ENCODE measurements at regions of chr5 and their contacts with region 1.

Region 1: GRCh38 chr5:52693280-52693679 is 94.4 kb upstream of the ITGA1 start:
- DNase-seq: peak in 4 of 5 donors; percentile 23 to 32 (median 28)
- H3K4me3 ChIP-seq: no peak overlapping the region
- H3K4me3 Mint-ChIP-seq: no peak overlapping the region
- H3K27ac ChIP-seq: no peak overlapping the region
- H3K27ac Mint-ChIP-seq: no peak overlapping the region
- H3K4me1 ChIP-seq: no peaks in the 10 kb centered on the region
- H3K4me1 Mint-ChIP-seq: peaks cover 4 to 7% (median 5%) of the 10 kb centered on the region in 4 donors
- H3K27me3 ChIP-seq: no peaks in the 10 kb centered on the region
- H3K27me3 Mint-ChIP-seq: no peaks in the 10 kb centered on the region

Region 2: GRCh38 chr5:52517667-52518066 is 175.6 kb before region 1 on chr5:
- CTCF ChIA-PET with region 1: no interaction called
- POLR2A ChIA-PET with region 1: no interaction called
- intact Hi-C with region 1: no loop called
- DNase-seq: no peak
- H3K4me3 ChIP-seq: no peak overlapping the region
- H3K4me3 Mint-ChIP-seq: no peak overlapping the region
- H3K27ac ChIP-seq: no peak overlapping the region
- H3K27ac Mint-ChIP-seq: no peak overlapping the region
- H3K4me1 ChIP-seq: no peaks in the 10 kb centered on the region
- H3K4me1 Mint-ChIP-seq: no peaks in the 10 kb centered on the region
- H3K27me3 ChIP-seq: no peaks in the 10 kb centered on the region
- H3K27me3 Mint-ChIP-seq: peaks cover 3 to 6% of the 10 kb centered on the region in 2 donors

Region 3: DNA sequence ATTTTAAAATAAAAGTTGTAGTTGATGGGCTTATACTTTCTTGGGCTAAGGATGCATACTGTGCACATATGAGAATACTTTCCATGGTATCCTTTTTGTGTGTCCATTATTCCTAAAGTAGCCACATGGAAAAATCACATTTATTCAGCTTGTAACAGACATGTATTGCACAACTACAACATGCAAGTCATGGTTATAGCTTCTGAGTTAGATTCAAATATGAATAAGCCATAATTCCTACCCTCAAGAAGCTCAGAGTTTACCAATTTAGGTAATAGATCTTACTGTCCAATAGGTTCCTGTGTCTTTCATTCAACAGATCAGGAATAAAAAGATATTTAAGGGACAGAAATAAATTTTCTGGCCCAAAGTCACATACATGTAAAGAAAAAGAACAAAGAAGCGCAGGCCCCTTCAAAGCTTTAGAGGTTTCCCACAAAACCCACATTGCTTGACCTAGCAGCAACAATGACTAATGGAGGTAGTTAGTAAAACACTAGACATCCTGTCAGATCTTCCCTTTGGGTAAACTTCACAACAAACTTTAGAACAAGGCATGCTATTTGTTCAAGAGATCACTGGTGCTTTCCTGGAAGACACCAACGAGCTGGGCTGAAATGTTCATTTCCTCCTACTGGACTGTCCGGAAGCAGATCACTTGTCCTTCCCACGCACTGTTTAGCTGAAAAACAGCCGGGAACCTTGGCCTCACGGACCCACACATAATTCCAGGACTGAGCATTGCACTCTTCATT is 16.1 kb after region 1 on chr5:
- CTCF ChIA-PET with region 1: interaction called, 13 read pairs
- POLR2A ChIA-PET with region 1: interaction called, 3 read pairs
- intact Hi-C with region 1: no loop called
- DNase-seq: no peak
- H3K4me3 ChIP-seq: no peak overlapping the region
- H3K4me3 Mint-ChIP-seq: peak overlapping the region in 7 of 8 donors; percentile 3 to 64 (median 46)
- H3K27ac ChIP-seq: no peak overlapping the region
- H3K27ac Mint-ChIP-seq: peak overlapping the region in 4 of 7 donors; percentile 19 to 67 (median 32)
- H3K4me1 ChIP-seq: peaks cover 54% of the 10 kb centered on the region
- H3K4me1 Mint-ChIP-seq: peaks cover 42 to 84% (median 60%) of the 10 kb centered on the region in 4 donors
- H3K27me3 ChIP-seq: no peaks in the 10 kb centered on the region
- H3K27me3 Mint-ChIP-seq: no peaks in the 10 kb centered on the region

Region 4: DNA sequence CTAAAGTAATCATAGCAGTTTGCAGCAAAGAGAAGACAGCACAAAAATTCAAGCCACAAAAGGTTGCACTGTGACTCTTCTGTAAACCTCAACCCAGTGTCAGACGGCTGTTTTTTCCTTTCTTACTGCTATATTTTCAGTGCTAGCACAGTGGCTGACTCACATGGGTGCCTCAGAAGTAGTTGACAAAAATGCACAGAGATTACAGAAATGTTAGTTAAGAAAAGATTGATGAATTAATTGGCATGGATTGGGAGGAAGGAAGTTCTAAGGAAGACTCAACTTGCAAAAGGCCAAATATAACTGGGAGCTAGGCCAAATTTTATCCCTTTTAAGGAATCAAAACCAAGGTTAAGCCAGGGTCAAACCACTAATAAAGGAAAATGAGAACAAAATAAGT is 50.7 kb after region 1 on chr5:
- CTCF ChIA-PET with region 1: interaction called, 5 read pairs
- POLR2A ChIA-PET with region 1: no interaction called
- intact Hi-C with region 1: loop called (anchors 2 kb)
- DNase-seq: peak; percentile 40 to 59 (median 52)
- H3K4me3 ChIP-seq: no peak overlapping the region
- H3K4me3 Mint-ChIP-seq: peak overlapping the region; percentile 26 to 79 (median 68)
- H3K27ac ChIP-seq: peak overlapping the region; percentile 34
- H3K27ac Mint-ChIP-seq: peak overlapping the region; percentile 45 to 97 (median 90)
- H3K4me1 ChIP-seq: peaks cover 45% of the 10 kb centered on the region
- H3K4me1 Mint-ChIP-seq: peaks cover 40 to 69% (median 49%) of the 10 kb centered on the region in 4 donors
- H3K27me3 ChIP-seq: no peaks in the 10 kb centered on the region
- H3K27me3 Mint-ChIP-seq: no peaks in the 10 kb centered on the region

Region 5: GRCh38 chr5:52771343-52772039 is 78.2 kb after region 1 on chr5:
- CTCF ChIA-PET with region 1: interaction called, 11 read pairs
- POLR2A ChIA-PET with region 1: no interaction called
- intact Hi-C with region 1: no loop called
- DNase-seq: peak in 4 of 5 donors; percentile 25 to 40 (median 29)
- H3K4me3 ChIP-seq: no peak overlapping the region
- H3K4me3 Mint-ChIP-seq: peak overlapping the region in 7 of 8 donors; percentile 29 to 84 (median 63)
- H3K27ac ChIP-seq: peak overlapping the region; percentile 16
- H3K27ac Mint-ChIP-seq: peak overlapping the region; percentile 24 to 87 (median 81)
- H3K4me1 ChIP-seq: peaks cover 50% of the 10 kb centered on the region
- H3K4me1 Mint-ChIP-seq: peaks cover 31 to 45% (median 42%) of the 10 kb centered on the region in 4 donors
- H3K27me3 ChIP-seq: no peaks in the 10 kb centered on the region
- H3K27me3 Mint-ChIP-seq: peaks cover 0 to 2% of the 10 kb centered on the region in 2 donors

Region 6: GRCh38 chr5:52799983-52800393 is 106.7 kb after region 1 on chr5:
- CTCF ChIA-PET with region 1: interaction called, 35 read pairs
- POLR2A ChIA-PET with region 1: interaction called, 9 read pairs
- intact Hi-C with region 1: loop called (anchors 1 kb)
- DNase-seq: peak; percentile 92 to 95 (median 94)
- H3K4me3 ChIP-seq: peak overlapping the region; percentile 78 to 98
- H3K4me3 Mint-ChIP-seq: peak overlapping the region; percentile 93 to 99 (median 98)
- H3K27ac ChIP-seq: peak overlapping the region; percentile 72
- H3K27ac Mint-ChIP-seq: peak overlapping the region; percentile 90 to 99 (median 96)
- H3K4me1 ChIP-seq: peaks cover 49% of the 10 kb centered on the region
- H3K4me1 Mint-ChIP-seq: peaks cover 37 to 67% (median 49%) of the 10 kb centered on the region in 4 donors
- H3K27me3 ChIP-seq: no peaks in the 10 kb centered on the region
- H3K27me3 Mint-ChIP-seq: no peaks in the 10 kb centered on the region

Region 7: DNA sequence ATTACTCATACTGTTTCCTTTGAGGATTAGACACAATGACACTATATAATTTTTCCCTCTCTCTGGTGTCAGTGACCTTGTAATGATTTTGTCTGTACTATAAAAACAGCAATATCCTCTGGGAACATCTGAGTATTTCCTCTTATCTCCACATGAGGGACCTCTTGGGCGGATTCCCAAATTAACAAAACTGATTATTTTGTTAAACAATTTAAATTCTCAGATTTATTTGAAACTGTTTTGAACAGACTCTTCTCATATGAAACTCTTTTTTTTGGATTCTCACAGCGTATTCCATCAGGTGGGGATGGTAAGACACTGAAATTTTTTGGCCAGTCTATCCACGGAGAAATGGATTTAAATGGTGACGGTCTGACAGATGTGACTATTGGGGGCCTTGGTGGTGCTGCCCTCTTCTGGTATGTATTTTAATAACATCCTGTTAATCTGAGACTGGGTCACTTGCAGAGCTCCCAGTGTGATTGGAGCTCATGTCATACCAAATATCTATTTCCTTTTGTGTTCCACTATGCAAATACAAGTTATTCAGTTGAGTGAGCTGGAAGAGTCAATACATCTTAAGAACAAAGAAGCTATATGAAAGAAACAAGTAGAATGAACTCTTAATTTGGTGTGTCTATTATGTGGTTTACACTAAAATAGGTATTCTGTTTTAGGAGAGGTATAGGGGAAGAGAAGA is 222.0 kb after region 1 on chr5:
- CTCF ChIA-PET with region 1: interaction called, 93 read pairs
- POLR2A ChIA-PET with region 1: no interaction called
- intact Hi-C with region 1: loop called (anchors 1 kb)
- DNase-seq: peak; percentile 41 to 72 (median 67)
- H3K4me3 ChIP-seq: no peak overlapping the region
- H3K4me3 Mint-ChIP-seq: peak overlapping the region in 7 of 8 donors; percentile 58 to 77 (median 74)
- H3K27ac ChIP-seq: no peak overlapping the region
- H3K27ac Mint-ChIP-seq: peak overlapping the region in 1 of 7 donors; percentile 39
- H3K4me1 ChIP-seq: peaks cover 5% of the 10 kb centered on the region
- H3K4me1 Mint-ChIP-seq: peaks cover 0 to 9% (median 2%) of the 10 kb centered on the region in 4 donors
- H3K27me3 ChIP-seq: no peaks in the 10 kb centered on the region
- H3K27me3 Mint-ChIP-seq: no peaks in the 10 kb centered on the region

Region 8: DNA sequence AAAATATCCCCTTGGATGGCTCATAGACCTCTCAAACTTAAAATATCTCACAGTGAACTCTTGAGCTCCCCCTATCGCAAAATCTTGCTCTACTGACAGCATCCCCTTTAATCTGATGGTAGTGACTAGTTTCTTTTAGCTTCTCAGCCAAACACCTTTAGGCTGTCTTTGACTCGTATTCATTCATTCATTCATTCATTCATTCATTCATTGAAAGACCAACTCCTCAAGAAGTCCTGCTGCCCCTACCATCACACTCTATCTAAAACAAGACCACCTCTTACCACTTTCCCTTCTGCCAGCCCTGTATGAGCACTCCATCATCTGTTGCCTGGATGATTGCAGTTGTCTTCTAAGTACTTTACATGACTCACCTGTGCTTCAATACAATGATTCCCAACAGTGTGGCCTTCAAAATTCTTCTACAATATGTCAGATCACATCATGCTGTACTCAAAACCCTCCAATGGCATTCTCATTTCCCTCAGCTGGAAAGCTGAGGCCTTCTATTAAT is 342.6 kb after region 1 on chr5:
- CTCF ChIA-PET with region 1: no interaction called
- POLR2A ChIA-PET with region 1: no interaction called
- intact Hi-C with region 1: no loop called
- DNase-seq: no peak
- H3K4me3 ChIP-seq: no peak overlapping the region
- H3K4me3 Mint-ChIP-seq: no peak overlapping the region
- H3K27ac ChIP-seq: no peak overlapping the region
- H3K27ac Mint-ChIP-seq: peak overlapping the region in 1 of 7 donors; percentile 32
- H3K4me1 ChIP-seq: peaks cover 29% of the 10 kb centered on the region
- H3K4me1 Mint-ChIP-seq: peaks cover 18 to 42% (median 24%) of the 10 kb centered on the region in 4 donors
- H3K27me3 ChIP-seq: no peaks in the 10 kb centered on the region
- H3K27me3 Mint-ChIP-seq: no peaks in the 10 kb centered on the region